Activated T-helper 2 cell treated with anti-CD3 and anti-CD28 coated beads, Interferon-gamma antibody, Interleukin-2, Interleukin-4, amounts not matched to agents 10 μg/mL and 5 μg/mL and 100 μg/mL, durations not matched to agents 14 hours and 24 hours and 36 hours (primary cell): ENCODE measurements at regions of chr1 and their contacts with region 1.

Region 1: GRCh38 chr1:158819461-158820443 is 11.4 kb upstream of the MNDA start:
- DNase-seq: peak; percentile 26
- H3K4me3 Mint-ChIP-seq: peak overlapping the region; percentile 41
- H3K27ac Mint-ChIP-seq: peak overlapping the region; percentile 84
- H3K4me1 Mint-ChIP-seq: peaks cover 37% of the 10 kb centered on the region
- H3K27me3 Mint-ChIP-seq: peaks cover 3% of the 10 kb centered on the region

Region 2: DNA sequence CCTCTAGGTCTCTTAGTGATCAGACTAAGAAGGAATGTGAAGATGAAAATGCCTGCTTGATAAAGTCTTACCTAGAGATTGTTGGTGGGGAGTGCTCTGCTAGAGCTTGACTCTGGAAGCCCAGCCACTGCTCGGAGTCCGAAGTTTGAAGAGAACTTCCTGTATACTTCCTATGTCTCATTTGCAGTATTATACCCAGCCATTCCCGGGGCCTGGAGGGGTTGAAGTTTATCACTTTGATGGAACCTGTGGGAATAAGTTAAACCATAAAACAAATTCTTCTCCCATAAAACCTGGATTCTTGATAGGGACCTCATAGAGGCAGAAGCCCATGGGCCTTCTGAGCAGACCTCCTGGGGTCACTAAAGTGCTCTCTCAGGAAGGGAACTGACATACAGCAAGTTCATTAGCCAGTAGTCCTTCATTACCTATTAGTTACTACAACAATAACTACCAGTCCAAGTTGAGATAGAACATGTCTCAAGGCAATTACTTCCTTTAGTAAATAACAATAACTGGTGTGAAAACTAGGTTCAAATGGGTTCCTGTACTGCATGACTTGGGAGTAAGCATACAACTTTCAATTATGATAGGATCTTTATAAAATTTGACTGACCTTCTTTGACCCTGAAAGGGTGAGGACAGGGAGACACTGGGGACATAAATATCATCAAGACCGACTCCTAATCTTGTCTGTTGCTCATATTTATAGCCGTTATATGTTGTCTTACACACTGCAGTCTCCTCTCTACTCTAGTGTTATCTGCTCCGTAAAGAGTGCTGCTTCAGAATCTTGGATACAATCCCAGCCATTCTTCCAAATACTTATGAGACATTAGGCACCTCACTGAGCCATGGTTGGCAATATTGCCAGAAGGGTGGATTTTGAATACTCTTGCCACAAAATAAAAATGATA is 47.5 kb before region 1 on chr1 and contains the start of gene OR6N1:
- intact Hi-C with region 1: no loop called
- DNase-seq: no peak
- H3K4me3 Mint-ChIP-seq: no peak within 1 kb of the TSS
- H3K27ac Mint-ChIP-seq: no peak within 1 kb of the TSS
- H3K4me1 Mint-ChIP-seq: no peaks in the 10 kb centered on the region
- H3K27me3 Mint-ChIP-seq: peaks cover 22% of the 10 kb centered on the region
- total RNA-seq, gene OR6N1: not detected in 2 replicates

Region 3: GRCh38 chr1:158793604-158794003 is 26.1 kb before region 1 on chr1:
- intact Hi-C with region 1: loop called (anchors 2 kb)
- DNase-seq: peak; percentile 18
- H3K4me3 Mint-ChIP-seq: no peak overlapping the region
- H3K27ac Mint-ChIP-seq: no peak overlapping the region
- H3K4me1 Mint-ChIP-seq: no peaks in the 10 kb centered on the region
- H3K27me3 Mint-ChIP-seq: peaks cover 25% of the 10 kb centered on the region

Region 4: DNA sequence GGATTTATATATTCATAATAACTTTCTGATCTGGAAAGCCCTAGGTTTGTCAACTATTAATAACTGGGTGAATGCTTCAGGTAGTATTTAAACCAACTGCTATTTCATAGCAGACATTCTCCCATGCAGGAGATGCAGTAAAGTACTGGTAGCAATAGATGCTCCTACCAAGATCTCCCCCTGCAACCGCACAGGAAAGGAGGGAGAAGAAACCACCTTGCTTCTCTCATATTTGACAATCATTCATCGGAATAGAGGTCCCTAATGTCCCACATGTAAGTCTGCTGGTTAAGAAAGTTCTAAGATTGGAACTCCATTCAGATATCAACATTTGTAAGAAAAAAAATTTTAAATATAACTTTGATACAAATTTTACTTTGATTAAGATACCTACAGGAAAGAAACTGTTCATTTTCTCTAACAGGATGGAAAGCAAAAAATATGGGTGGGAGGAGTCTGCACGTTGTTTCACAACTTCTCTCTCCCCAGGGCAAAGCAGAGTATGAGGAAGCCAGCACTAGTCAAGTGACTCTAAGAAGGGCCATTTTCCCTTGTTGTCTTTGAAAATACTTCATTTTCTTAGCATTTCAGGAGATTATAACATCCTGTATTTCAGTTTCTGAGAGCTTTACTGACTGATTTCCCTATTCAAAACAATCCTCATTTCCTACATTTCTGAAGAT is 111.4 kb after region 1 on chr1 and contains the start of gene PYHIN1:
- intact Hi-C with region 1: loop called (anchors 2 kb)
- DNase-seq: peak; percentile 20
- H3K4me3 Mint-ChIP-seq: peak within 1 kb of the TSS; percentile 91
- H3K27ac Mint-ChIP-seq: peak within 1 kb of the TSS; percentile 91
- H3K4me1 Mint-ChIP-seq: peaks cover 35% of the 10 kb centered on the region
- H3K27me3 Mint-ChIP-seq: no peaks in the 10 kb centered on the region
- total RNA-seq, gene PYHIN1: 7.4 and 10.0 TPM in 2 replicates

Region 5: GRCh38 chr1:158998781-158999161 is 179.0 kb after region 1 on chr1:
- intact Hi-C with region 1: loop called (anchors 1 kb)
- DNase-seq: peak; percentile 33
- H3K4me3 Mint-ChIP-seq: peak overlapping the region; percentile 43
- H3K27ac Mint-ChIP-seq: no peak overlapping the region
- H3K4me1 Mint-ChIP-seq: peaks cover 31% of the 10 kb centered on the region
- H3K27me3 Mint-ChIP-seq: no peaks in the 10 kb centered on the region

Region 6: DNA sequence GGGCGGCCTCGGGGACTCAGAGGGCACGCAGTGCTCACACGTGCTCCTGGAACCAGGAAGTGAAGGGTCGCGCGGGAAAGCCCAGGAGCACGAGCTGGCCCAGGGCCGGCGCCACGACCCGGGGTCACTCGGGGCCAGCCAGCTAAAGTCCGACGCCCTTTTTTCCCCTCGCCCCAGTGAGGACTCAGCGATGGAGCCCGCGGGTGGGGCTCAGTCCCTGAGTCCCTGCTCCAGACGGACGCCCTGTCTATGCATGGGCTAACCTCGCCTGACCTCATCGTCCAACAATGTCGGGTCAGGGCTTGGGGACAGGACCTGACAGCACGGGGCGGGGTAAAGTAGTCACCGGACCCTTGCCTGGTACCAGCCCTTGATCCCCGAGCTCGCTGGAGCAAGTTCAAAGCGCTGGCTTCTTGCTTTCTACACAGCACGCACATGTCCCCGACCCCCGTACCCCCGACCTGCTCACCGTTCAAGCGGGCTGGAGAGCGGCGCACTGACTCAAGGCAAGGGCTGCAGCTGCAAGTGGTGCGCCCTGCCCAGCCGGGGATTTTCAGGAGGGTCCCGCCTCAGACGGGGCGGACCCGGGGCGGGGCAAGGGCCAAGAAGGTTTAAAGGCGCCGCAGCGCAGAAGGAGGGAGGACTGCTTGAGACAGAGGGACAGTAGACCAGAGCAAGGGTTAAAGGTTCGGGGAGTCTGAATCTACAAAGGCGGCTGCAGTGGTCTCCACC is 1105.4 kb after region 1 on chr1 and contains the start of gene TAGLN2:
- intact Hi-C with region 1: loop called (anchors 5 kb)
- DNase-seq: peak; percentile 86
- H3K4me3 Mint-ChIP-seq: peak within 1 kb of the TSS; percentile 95
- H3K27ac Mint-ChIP-seq: peak within 1 kb of the TSS; percentile 98
- H3K4me1 Mint-ChIP-seq: peaks cover 36% of the 10 kb centered on the region
- H3K27me3 Mint-ChIP-seq: no peaks in the 10 kb centered on the region
- total RNA-seq, gene TAGLN2: 558 and 578 TPM in 2 replicates